Heart left ventricle (tissue), 16 donors: ENCODE measurements at regions of chr16 and their contacts with region 1.

Region 1: DNA sequence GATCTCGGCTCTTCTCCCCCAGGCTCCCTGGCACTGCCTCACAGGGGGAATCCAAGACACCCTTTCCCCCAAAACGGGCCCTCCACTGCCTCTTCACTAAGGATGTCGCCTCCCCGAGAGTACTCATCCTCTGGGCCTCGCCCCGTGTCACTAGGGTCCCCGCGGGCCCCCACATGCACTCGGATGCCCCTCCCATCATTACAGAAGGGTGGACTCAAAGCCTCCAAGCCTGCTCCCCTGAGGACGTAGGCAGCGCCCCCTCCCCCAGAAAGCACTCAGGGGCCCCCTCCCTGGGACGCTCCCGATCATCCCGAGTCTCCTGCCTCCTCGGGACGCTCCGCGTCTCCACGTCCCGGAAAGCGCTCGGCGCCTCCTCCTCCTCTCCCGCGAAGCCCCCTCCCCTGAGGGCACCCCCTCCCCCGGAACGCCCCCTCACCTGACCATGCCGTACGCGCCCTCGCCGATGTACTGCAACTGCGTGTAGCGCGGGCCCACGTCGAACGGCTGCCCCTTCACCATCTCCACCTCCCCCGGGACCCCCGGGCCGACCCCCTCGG is 338 bp downstream of the MAPK3 start:
- DNase-seq: peak in 2 of 5 donors; percentile 47 to 64
- ATAC-seq: peak in 3 of 4 donors; percentile 15 to 38 (median 17)
- H3K4me3 ChIP-seq: peak overlapping the region; percentile 64 to 96 (median 81)
- H3K27ac ChIP-seq: peak overlapping the region; percentile 87 to 99 (median 95)
- H3K4me1 ChIP-seq: peaks cover 0 to 41% (median 15%) of the 10 kb centered on the region in 12 donors
- H3K27me3 ChIP-seq: no peaks in the 10 kb centered on the region
- CTCF ChIP-seq: no peak
- POLR2A ChIP-seq: no peak

Region 2: GRCh38 chr16:30018731-30019158 is 103.9 kb before region 1 on chr16:
- intact Hi-C with region 1: no loop called
- DNase-seq: peak in 1 of 5 donors; percentile 0
- ATAC-seq: no peak
- H3K4me3 ChIP-seq: no peak overlapping the region
- H3K27ac ChIP-seq: no peak overlapping the region
- H3K4me1 ChIP-seq: peaks cover 0 to 13% (median 4%) of the 10 kb centered on the region in 12 donors
- H3K27me3 ChIP-seq: no peaks in the 10 kb centered on the region
- CTCF ChIP-seq: no peak
- POLR2A ChIP-seq: no peak

Region 3: DNA sequence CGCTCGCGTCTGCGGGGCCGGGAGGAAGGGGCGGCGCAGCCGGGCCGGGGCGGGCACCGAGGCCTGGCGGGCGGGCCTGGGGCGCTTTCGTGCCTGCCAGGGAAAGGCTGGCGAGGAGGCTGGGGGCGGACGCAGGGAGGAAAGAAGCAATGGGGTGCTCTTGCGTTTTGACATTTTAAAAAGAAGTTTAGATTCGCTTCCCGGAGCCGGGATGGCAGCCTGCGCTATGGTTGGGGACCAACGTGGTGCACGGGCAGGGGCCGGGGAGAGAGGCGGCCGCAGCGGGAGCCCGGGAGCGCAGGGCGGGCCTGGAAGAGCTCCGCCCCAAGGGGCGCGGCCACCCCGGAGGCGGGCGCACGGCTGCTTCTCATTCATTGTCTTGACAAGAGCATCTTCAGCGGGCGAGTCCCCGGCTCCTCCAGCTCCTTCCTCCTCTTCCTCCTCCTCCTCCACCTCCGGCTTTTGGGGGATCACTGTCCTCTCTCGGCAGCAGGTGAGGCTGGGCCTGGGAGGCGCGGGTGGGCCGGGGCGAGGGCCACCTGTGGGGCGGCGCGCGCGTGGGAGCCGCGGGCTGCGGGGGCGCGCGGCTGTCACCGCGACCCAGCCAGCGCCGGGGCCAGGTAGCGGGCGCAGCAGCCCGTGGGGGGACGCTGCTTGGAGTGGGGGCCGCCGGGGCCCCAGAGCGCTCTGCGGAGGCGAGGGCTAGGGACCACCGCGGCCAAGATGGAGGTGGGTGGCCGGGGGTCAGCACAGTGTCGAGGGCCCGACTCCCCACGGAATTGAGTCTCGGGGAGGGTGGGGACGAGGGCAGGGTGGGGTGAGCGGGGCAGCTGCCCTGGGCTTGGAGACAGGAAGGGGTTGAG is 60.8 kb after region 1 on chr16 and contains the start of gene CORO1A:
- intact Hi-C with region 1: loop called in 1 of 10 experiments (anchors 5 kb)
- DNase-seq: peak; percentile 82 to 95 (median 87)
- ATAC-seq: peak; percentile 71 to 88 (median 86)
- H3K4me3 ChIP-seq: peak within 1 kb of the TSS; percentile 26 to 92 (median 66)
- H3K27ac ChIP-seq: peak within 1 kb of the TSS; percentile 40 to 91 (median 68)
- H3K4me1 ChIP-seq: peaks cover 0 to 40% (median 11%) of the 10 kb centered on the region in 12 donors
- H3K27me3 ChIP-seq: no peaks in the 10 kb centered on the region
- CTCF ChIP-seq: no peak
- POLR2A ChIP-seq: peak in 1 of 2 donors; percentile 51
- total RNA-seq, gene CORO1A: 4.3 to 102 (median 8.5) TPM

Region 4: GRCh38 chr16:30417529-30418349 is 295.1 kb after region 1 on chr16:
- intact Hi-C with region 1: loop called in 2 of 10 experiments (anchors 10 kb)
- DNase-seq: peak; percentile 84 to 93 (median 87)
- ATAC-seq: peak; percentile 89 to 96 (median 92)
- H3K4me3 ChIP-seq: peak overlapping the region; percentile 38 to 76 (median 64)
- H3K27ac ChIP-seq: peak overlapping the region; percentile 14 to 91 (median 77)
- H3K4me1 ChIP-seq: peaks cover 0 to 27% (median 10%) of the 10 kb centered on the region in 12 donors
- H3K27me3 ChIP-seq: no peaks in the 10 kb centered on the region
- CTCF ChIP-seq: peak in 7 of 12 donors; percentile 12 to 46 (median 28)
- POLR2A ChIP-seq: peak in 1 of 2 donors; percentile 45